GM13976 (cell line): ENCODE measurements at regions of chr15 and their contacts with region 1.

Region 1: GRCh38 chr15:88904624-88905327 is 8.4 kb downstream of the MFGE8 start:
- DNase-seq: peak; percentile 86
- CTCF ChIP-seq: peak; percentile 91

Region 2: DNA sequence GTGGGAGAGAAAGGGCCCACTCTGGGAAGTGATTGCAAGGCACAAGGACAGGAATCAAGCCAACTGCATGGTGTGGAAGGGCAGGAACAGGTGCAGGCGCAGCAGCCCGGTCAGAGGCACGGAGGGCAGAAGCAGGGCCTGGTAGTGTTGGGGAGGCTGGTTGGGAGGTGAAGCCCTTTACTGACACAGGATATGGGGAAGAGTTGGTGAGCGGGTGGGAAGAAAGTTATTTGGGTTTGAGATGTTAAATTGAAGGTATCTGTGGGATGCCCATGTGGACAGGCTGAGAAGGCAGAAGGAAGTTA is 99.9 kb after region 1 on chr15:
- in situ Hi-C with region 1: loop called (anchors 5 kb)
- DNase-seq: no peak
- CTCF ChIP-seq: no peak

Region 3: GRCh38 chr15:89179966-89180875 is 275.4 kb after region 1 on chr15:
- in situ Hi-C with region 1: loop called (anchors 10 kb)
- DNase-seq: peak; percentile 41
- CTCF ChIP-seq: no peak

Region 4: GRCh38 chr15:89998141-89998661 is 1093.4 kb after region 1 on chr15:
- in situ Hi-C with region 1: no loop called
- DNase-seq: no peak
- CTCF ChIP-seq: no peak